ENCODE measurements at regions of chr11 and their contacts with region 1.

Region 1: DNA sequence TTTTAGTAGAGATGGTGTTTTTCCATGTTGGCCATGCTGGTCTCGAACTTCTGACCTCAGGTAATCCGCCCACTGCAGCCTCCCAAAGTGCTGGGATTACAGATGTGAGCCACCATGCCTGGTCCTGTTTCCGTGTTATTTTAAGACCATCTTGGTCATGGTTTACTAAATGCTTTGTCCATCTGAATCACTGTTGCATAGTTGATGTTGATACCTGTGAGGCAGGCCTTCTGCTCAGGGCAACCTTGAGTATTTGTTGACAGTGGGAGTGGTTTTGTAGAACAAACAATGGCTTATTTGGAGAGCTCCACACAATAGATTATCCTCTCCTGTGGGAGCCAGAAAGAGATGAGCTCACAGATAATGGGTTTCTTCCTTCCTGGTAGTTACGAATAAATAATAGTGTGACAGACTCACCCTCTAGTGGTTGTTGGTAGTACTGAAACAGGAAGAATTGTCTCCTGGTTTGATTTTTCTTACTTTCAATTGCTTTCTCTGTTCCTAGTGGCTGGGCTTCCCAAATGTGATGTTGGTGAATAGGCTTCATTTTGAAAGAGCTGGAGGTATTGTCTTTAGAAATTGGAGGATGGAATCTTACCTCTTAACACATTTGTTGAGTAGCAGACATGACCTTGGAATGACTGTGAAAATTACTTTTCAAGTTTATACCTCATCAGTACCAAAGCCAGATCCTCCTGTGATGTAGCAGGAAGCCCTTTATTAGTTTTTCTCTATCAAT is 39.0 kb downstream of the CTNND1 start:
- DNase-seq: peak in 4 of 9 experiments; percentile 17 to 82 (median 62)
- ATAC-seq: peak; percentile 97
- H3K4me3 ChIP-seq: no peak overlapping the region
- H3K4me3 Mint-ChIP-seq: no peak overlapping the region
- H3K27ac ChIP-seq: peak overlapping the region in 1 of 2 experiments; percentile 59
- H3K27ac Mint-ChIP-seq: peak overlapping the region; percentile 83
- H3K4me1 ChIP-seq: peaks cover 22% of the 10 kb centered on the region
- H3K4me1 Mint-ChIP-seq: peaks cover 20% of the 10 kb centered on the region
- H3K27me3 ChIP-seq: no peaks in the 10 kb centered on the region
- H3K27me3 Mint-ChIP-seq: no peaks in the 10 kb centered on the region
- CTCF ChIP-seq: peak; percentile 94

Region 2: DNA sequence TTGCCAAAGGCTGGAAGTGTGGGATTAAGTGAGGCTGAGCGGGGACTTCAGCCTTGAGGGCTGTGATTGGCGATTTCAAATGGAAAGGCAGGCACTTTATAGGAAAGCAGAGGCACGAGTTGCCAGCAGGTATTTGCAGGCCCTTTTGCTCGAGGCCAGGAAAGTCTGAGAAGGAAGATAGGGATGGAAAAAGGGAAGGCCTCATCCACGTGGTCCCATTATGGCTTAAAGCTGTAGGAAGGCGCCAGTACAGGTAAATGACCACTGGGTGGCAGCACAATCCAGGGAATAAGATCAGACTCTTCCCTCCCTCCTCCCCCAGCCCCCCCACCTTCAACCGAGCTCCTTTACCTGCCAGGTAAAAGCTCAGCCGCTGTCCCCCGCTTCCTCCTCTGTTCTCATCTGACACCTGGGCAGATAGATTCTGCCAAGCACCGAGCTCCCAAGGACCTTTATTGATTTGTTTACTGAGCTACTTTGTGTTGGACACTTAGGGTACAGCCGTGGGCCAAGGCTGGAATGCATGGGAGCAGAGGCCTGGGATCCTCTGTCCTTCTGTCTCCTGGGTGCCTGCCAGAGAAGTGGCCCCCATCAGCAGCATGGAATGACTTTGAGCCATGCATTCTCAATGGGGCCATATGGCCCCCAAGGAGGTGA is 454.9 kb before region 1 on chr11:
- CTCF ChIA-PET with region 1: interaction called, 3 read pairs
- POLR2A ChIA-PET with region 1: no interaction called
- intact Hi-C with region 1: loop called (anchors 1 to 5 kb)
- DNase-seq: peak; percentile 45 to 85 (median 73)
- ATAC-seq: peak; percentile 93
- H3K4me3 ChIP-seq: no peak overlapping the region
- H3K4me3 Mint-ChIP-seq: no peak overlapping the region
- H3K27ac ChIP-seq: no peak overlapping the region
- H3K27ac Mint-ChIP-seq: no peak overlapping the region
- H3K4me1 ChIP-seq: no peaks in the 10 kb centered on the region
- H3K4me1 Mint-ChIP-seq: peaks cover 2% of the 10 kb centered on the region
- H3K27me3 ChIP-seq: no peaks in the 10 kb centered on the region
- H3K27me3 Mint-ChIP-seq: peaks cover 3% of the 10 kb centered on the region
- CTCF ChIP-seq: peak; percentile 80

Region 3: GRCh38 chr11:57567515-57568329 is 232.9 kb before region 1 on chr11 and contains the start of gene UBE2L6:
- CTCF ChIA-PET with region 1: interaction called, 28 read pairs
- POLR2A ChIA-PET with region 1: interaction called, 4 read pairs
- intact Hi-C with region 1: loop called (anchors 1 to 2 kb)
- DNase-seq: peak; percentile 29 to 92 (median 79)
- ATAC-seq: peak; percentile 77
- H3K4me3 ChIP-seq: peak within 1 kb of the TSS; percentile 86
- H3K4me3 Mint-ChIP-seq: peak within 1 kb of the TSS; percentile 100
- H3K27ac ChIP-seq: peak within 1 kb of the TSS; percentile 86 to 87
- H3K27ac Mint-ChIP-seq: peak within 1 kb of the TSS; percentile 99
- H3K4me1 ChIP-seq: peaks cover 20% of the 10 kb centered on the region
- H3K4me1 Mint-ChIP-seq: peaks cover 48% of the 10 kb centered on the region
- H3K27me3 ChIP-seq: no peaks in the 10 kb centered on the region
- H3K27me3 Mint-ChIP-seq: no peaks in the 10 kb centered on the region
- CTCF ChIP-seq: peak; percentile 93
- total RNA-seq, gene UBE2L6: 44.4 to 47.2 TPM

Region 4: DNA sequence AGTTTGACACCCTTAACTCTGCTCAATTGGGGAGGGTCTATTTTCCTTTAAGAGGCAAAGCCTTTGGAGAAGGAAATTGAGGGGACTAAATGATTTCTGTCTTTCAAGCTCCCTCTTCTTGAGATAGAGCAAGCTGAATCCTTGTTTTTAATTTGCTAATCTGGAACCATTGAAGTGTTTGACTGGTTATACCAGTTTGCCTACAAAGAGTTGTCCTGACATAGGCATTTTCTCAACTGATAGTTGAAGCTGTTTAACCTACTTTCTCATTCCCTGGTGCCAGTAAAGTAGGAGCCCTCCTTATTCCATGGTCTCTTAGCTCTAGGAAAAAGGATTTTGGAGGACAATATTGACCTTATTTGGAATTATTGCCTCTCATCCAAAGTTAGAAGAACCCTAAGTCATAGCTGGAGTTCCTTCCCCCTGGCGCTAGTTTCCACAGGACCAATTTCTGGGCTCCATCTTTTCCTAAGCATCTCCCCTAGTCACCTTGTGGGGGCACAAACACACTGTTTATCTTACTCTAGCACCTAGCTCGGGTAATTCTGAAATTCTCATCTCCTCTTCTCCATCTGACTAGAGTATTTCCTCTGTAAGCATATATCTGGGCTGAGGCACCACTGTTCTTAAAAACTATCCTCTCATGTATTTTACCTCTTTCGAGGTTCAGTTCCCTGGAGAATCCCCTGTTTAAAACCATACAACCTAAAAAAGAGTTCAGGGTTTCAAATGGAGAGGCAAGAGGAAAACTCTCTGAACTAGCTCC is 125.3 kb before region 1 on chr11:
- CTCF ChIA-PET with region 1: interaction called, 14 read pairs
- POLR2A ChIA-PET with region 1: interaction called, 4 read pairs
- intact Hi-C with region 1: loop called in 1 of 2 experiments (anchors 2 kb)
- DNase-seq: no peak
- ATAC-seq: no peak
- H3K4me3 ChIP-seq: no peak overlapping the region
- H3K4me3 Mint-ChIP-seq: peak overlapping the region; percentile 19
- H3K27ac ChIP-seq: no peak overlapping the region
- H3K27ac Mint-ChIP-seq: peak overlapping the region; percentile 71
- H3K4me1 ChIP-seq: peaks cover 74% of the 10 kb centered on the region
- H3K4me1 Mint-ChIP-seq: peaks cover 84% of the 10 kb centered on the region
- H3K27me3 ChIP-seq: no peaks in the 10 kb centered on the region
- H3K27me3 Mint-ChIP-seq: no peaks in the 10 kb centered on the region
- CTCF ChIP-seq: no peak

Region 5: DNA sequence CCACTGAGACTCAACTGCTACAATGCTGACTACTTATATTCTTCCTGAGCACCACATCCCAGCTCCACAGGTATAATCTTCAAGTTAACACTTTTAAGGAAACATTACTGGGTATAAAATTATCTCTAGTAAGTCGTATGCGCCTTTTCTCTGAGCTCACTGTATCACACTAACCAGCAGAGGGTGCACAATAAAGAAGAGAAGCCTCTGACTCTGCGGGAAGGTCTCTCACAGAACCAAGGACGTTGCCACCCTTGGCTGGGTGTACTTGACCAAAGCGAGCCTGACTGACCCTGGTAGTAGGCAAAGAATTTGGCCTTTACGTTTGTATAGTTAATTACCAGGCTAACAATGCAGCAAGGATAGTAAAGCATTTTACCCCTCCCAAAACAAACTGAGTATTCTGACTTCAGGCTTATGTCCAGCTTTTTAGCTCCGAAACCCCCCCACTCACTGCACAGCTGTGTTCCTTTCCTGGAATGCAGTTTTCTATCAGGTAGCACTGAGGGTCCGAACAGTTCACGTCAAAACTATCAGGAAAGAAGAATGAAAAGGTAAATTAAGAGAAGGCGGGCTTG is 48.8 kb before region 1 on chr11 and contains the start of gene BTBD18:
- CTCF ChIA-PET with region 1: interaction called, 98 read pairs
- POLR2A ChIA-PET with region 1: interaction called, 6 read pairs
- intact Hi-C with region 1: loop called (anchors 1 to 2 kb)
- DNase-seq: peak in 1 of 9 experiments; percentile 26
- ATAC-seq: no peak
- H3K4me3 ChIP-seq: no peak within 1 kb of the TSS
- H3K4me3 Mint-ChIP-seq: no peak within 1 kb of the TSS
- H3K27ac ChIP-seq: no peak within 1 kb of the TSS
- H3K27ac Mint-ChIP-seq: peak within 1 kb of the TSS; percentile 79
- H3K4me1 ChIP-seq: no peaks in the 10 kb centered on the region
- H3K4me1 Mint-ChIP-seq: peaks cover 21% of the 10 kb centered on the region
- H3K27me3 ChIP-seq: no peaks in the 10 kb centered on the region
- H3K27me3 Mint-ChIP-seq: no peaks in the 10 kb centered on the region
- CTCF ChIP-seq: no peak
- total RNA-seq, gene BTBD18: not detected

Region 6: GRCh38 chr11:57785072-57785471 is 15.5 kb before region 1 on chr11:
- CTCF ChIA-PET with region 1: interaction called, 12 read pairs
- POLR2A ChIA-PET with region 1: no interaction called
- intact Hi-C with region 1: no loop called
- DNase-seq: no peak
- ATAC-seq: no peak
- H3K4me3 ChIP-seq: no peak overlapping the region
- H3K4me3 Mint-ChIP-seq: no peak overlapping the region
- H3K27ac ChIP-seq: no peak overlapping the region
- H3K27ac Mint-ChIP-seq: no peak overlapping the region
- H3K4me1 ChIP-seq: peaks cover 18% of the 10 kb centered on the region
- H3K4me1 Mint-ChIP-seq: peaks cover 16% of the 10 kb centered on the region
- H3K27me3 ChIP-seq: no peaks in the 10 kb centered on the region
- H3K27me3 Mint-ChIP-seq: no peaks in the 10 kb centered on the region
- CTCF ChIP-seq: no peak

Measured in CD8-positive, alpha-beta T cell (primary cell).